ENCODE measurements at regions of chr14 and their contacts with region 1.

Region 1: GRCh38 chr14:64891839-64892375 is 12.2 kb upstream of the SPTB start:
- DNase-seq: peak; percentile 76 to 87 (median 83)
- H3K4me3 ChIP-seq: no peak overlapping the region
- H3K27ac ChIP-seq: no peak overlapping the region
- H3K4me1 ChIP-seq: no peaks in the 10 kb centered on the region
- H3K27me3 ChIP-seq: peaks cover 0 to 6% (median 0%) of the 10 kb centered on the region in 5 experiments

Region 2: GRCh38 chr14:64671591-64671990 is 220.3 kb before region 1 on chr14:
- CTCF ChIA-PET with region 1: interaction called, 43 read pairs
- POLR2A ChIA-PET with region 1: no interaction called
- DNase-seq: peak; percentile 68 to 88 (median 83)
- H3K4me3 ChIP-seq: no peak overlapping the region
- H3K27ac ChIP-seq: no peak overlapping the region
- H3K4me1 ChIP-seq: peaks cover 5 to 35% (median 13%) of the 10 kb centered on the region in 4 experiments
- H3K27me3 ChIP-seq: peaks cover 0 to 5% (median 0%) of the 10 kb centered on the region in 5 experiments

Region 3: GRCh38 chr14:64772393-64772950 is 119.4 kb before region 1 on chr14:
- CTCF ChIA-PET with region 1: interaction called, 11 read pairs
- POLR2A ChIA-PET with region 1: no interaction called
- DNase-seq: no peak
- H3K4me3 ChIP-seq: no peak overlapping the region
- H3K27ac ChIP-seq: no peak overlapping the region
- H3K4me1 ChIP-seq: no peaks in the 10 kb centered on the region
- H3K27me3 ChIP-seq: no peaks in the 10 kb centered on the region

Region 4: GRCh38 chr14:64812217-64812811 is 79.6 kb before region 1 on chr14:
- CTCF ChIA-PET with region 1: interaction called, 14 read pairs
- POLR2A ChIA-PET with region 1: no interaction called
- DNase-seq: no peak
- H3K4me3 ChIP-seq: no peak overlapping the region
- H3K27ac ChIP-seq: no peak overlapping the region
- H3K4me1 ChIP-seq: peaks cover 0 to 2% (median 0%) of the 10 kb centered on the region in 4 experiments
- H3K27me3 ChIP-seq: peaks cover 0 to 8% (median 0%) of the 10 kb centered on the region in 5 experiments

Region 5: DNA sequence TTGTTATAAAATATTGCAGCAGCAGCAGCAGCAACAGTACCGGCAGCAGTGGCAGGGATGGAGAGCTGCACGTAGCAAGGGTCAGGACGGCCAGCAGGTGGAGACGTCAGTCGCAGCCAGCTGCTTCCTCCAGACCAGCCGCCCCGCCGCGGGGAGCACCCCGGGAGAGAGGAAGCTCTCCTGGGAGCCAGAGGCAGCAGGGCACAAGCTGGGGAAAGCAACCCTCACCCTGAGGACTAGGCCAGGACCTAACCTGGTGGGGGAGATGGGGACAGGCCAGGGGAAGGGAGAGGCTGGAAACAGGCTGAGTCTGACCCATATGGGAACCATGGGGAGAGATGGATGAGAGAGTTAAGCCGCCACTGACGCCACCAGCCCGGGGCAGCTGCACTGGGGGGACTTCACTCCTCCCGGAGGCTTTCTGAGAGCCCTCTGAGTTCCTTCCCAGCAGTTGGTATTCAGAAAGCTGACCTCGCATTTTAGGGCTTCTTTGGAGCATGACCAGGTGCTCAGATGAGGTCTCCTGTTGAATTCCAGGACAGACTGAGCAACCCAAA is 68.5 kb before region 1 on chr14:
- CTCF ChIA-PET with region 1: interaction called, 113 read pairs
- POLR2A ChIA-PET with region 1: interaction called, 3 read pairs
- DNase-seq: peak; percentile 58 to 76 (median 76)
- H3K4me3 ChIP-seq: peak overlapping the region in 2 of 7 experiments; percentile 27 to 63
- H3K27ac ChIP-seq: no peak overlapping the region
- H3K4me1 ChIP-seq: peaks cover 0 to 5% (median 2%) of the 10 kb centered on the region in 4 experiments
- H3K27me3 ChIP-seq: peaks cover 0 to 27% (median 6%) of the 10 kb centered on the region in 5 experiments

Region 6: DNA sequence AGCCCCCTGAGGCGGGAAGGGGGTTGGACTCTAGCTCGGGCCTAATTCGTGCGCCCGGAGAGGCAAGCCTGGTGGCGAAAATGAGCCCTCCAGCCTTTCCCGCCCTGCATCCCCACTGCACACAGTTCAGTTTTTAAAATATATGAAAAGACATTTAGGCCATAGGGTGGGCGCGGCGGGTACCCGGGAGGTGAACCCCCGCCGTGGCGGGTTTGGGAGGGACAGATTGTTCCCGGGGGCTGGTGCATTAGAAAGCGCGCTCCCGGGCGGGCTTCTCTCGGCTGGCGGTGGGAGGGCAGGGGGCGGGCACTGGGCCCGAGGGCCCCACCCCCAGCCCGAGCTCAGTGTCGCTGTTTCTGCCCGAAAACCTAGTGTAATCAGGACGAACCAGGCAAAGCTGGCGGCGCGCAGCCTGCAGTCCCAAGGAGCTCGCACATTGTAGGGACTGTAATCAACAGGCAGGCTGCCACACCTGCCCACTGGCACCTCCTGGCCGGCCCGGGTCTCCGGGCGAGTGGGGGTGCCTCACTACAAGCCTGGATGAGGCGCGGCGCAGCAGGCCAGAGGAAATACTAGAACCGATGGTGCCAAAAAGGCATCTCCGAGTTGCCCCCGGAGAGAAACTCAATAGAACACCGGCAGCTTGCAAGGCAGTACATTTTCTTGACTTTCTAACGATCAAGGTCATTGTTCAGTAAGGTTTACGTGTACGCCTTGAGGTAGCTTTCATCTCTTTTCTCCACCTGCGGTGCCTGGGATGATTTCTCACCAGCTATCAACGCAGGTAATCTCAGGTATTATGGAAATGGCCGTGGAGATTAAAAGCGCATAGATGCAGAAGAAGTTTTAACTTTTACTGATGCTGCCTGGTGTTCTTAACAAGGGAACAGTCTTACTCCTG is 11.4 kb before region 1 on chr14:
- CTCF ChIA-PET with region 1: interaction called, 77 read pairs
- POLR2A ChIA-PET with region 1: no interaction called
- DNase-seq: peak; percentile 41 to 75 (median 63)
- H3K4me3 ChIP-seq: peak overlapping the region; percentile 37 to 80 (median 66)
- H3K27ac ChIP-seq: no peak overlapping the region
- H3K4me1 ChIP-seq: peaks cover 0 to 21% (median 18%) of the 10 kb centered on the region in 4 experiments
- H3K27me3 ChIP-seq: peaks cover 19 to 62% (median 31%) of the 10 kb centered on the region in 5 experiments

Region 7: DNA sequence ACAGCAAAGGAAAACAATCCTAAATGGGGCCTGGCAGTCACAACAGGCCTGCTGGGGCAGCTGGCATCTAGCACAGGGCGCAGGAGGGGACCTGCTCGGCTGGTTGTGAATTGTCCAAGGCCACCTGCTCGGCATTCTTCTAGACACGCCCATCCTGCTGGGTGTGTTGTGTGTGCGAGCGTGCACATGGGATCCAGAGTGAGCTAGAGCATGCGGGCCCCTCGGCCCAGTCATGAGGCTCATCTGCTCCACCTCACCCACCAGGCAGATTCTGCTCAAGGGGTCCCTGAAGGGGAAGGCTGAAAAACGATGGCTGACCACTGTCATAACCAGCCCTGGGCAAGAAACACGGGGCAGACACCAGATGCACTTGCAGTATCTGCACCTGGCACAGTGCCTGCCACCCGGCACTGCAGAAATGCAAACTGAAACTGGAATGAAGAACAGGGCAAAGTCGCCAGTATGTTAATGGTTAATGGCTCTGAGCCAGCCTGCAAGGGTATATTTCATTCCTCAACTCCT is 178.6 kb after region 1 on chr14:
- CTCF ChIA-PET with region 1: no interaction called
- POLR2A ChIA-PET with region 1: no interaction called
- DNase-seq: no peak
- H3K4me3 ChIP-seq: no peak overlapping the region
- H3K27ac ChIP-seq: no peak overlapping the region
- H3K4me1 ChIP-seq: peaks cover 7 to 23% (median 17%) of the 10 kb centered on the region in 4 experiments
- H3K27me3 ChIP-seq: no peaks in the 10 kb centered on the region

Measured in common myeloid progenitor, CD34-positive (primary cell).